ENCODE measurements at regions of chr2 and their contacts with region 1.

Region 1: DNA sequence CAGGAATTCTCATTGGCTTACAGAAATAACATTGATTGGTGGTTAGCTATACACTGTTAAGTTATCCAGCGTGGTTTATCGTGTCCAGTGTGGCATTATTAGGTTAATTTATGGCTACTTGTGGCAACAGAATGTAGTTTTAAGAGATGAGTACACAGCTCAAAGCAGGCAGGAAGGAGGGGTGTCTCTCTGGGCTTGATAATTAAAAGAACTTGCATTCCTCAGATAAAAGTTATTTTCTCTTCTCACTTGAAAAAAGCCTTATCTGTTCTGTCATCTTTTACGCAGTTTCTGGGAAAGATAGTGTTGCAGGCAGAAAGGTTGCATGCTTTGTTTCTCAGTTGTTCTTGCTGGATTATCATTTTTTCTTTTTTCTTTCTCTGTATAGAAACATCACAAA is 154.4 kb upstream of the COL3A1 start:
- DNase-seq: no peak
- ATAC-seq: no peak
- H3K4me3 ChIP-seq: no peak overlapping the region
- H3K27ac ChIP-seq: no peak overlapping the region
- H3K4me1 ChIP-seq: no peaks in the 10 kb centered on the region
- H3K27me3 ChIP-seq: no peaks in the 10 kb centered on the region
- CTCF ChIP-seq: no peak

Region 2: DNA sequence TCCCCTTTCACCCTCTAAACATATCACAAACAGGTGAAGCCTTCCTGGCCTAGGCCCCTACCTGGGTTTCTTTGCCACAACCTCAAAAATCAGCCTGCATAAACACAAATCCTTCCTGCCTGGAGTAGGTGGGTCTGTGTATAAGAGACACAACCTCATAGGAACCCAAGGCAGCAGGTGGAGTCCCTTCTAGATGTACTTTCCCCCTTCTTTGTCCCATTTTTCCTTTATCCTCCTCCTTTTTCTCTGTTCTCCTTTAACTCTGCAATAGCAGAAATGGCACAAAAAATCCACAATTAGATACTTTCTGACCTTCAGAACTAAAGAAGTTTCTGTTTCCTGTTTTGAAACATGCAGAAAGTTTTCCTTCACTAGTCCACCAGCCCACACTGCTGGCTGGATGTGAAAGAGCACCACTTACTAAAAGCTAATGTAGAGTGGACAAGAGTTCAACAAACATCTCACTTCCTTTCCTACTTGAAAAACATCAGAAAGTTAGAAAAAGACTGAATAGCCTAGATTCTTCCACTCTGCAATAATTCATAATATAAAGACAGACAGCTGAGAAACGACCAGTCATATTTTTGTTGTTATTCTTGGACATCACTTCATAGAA is 749.6 kb after region 1 on chr2:
- CTCF ChIA-PET with region 1: no interaction called
- POLR2A ChIA-PET with region 1: interaction called, 13 read pairs
- intact Hi-C with region 1: no loop called
- DNase-seq: no peak
- ATAC-seq: no peak
- H3K4me3 ChIP-seq: no peak overlapping the region
- H3K27ac ChIP-seq: no peak overlapping the region
- H3K4me1 ChIP-seq: no peaks in the 10 kb centered on the region
- H3K27me3 ChIP-seq: no peaks in the 10 kb centered on the region
- CTCF ChIP-seq: no peak

Measured in PC-3 (cell line).